ENCODE measurements at regions of chr21 and their contacts with region 1.

Region 1: GRCh38 chr21:43634618-43635017 is 24.7 kb downstream of the HSF2BP start:
- DNase-seq: no peak
- H3K4me3 ChIP-seq: no peak overlapping the region
- H3K27ac ChIP-seq: no peak overlapping the region
- H3K4me1 ChIP-seq: peaks cover 7% of the 10 kb centered on the region
- H3K27me3 ChIP-seq: no peaks in the 10 kb centered on the region
- CTCF ChIP-seq: no peak

Region 2: GRCh38 chr21:43611598-43612369 is 22.8 kb before region 1 on chr21:
- CTCF ChIA-PET with region 1: no interaction called
- dilution Hi-C with region 1: no loop called
- in situ Hi-C with region 1: no loop called
- intact Hi-C with region 1: loop called (anchors 2 kb)
- DNase-seq: peak; percentile 57
- H3K4me3 ChIP-seq: no peak overlapping the region
- H3K27ac ChIP-seq: no peak overlapping the region
- H3K4me1 ChIP-seq: peaks cover 36% of the 10 kb centered on the region
- H3K27me3 ChIP-seq: no peaks in the 10 kb centered on the region
- CTCF ChIP-seq: peak; percentile 72 to 87

Region 3: DNA sequence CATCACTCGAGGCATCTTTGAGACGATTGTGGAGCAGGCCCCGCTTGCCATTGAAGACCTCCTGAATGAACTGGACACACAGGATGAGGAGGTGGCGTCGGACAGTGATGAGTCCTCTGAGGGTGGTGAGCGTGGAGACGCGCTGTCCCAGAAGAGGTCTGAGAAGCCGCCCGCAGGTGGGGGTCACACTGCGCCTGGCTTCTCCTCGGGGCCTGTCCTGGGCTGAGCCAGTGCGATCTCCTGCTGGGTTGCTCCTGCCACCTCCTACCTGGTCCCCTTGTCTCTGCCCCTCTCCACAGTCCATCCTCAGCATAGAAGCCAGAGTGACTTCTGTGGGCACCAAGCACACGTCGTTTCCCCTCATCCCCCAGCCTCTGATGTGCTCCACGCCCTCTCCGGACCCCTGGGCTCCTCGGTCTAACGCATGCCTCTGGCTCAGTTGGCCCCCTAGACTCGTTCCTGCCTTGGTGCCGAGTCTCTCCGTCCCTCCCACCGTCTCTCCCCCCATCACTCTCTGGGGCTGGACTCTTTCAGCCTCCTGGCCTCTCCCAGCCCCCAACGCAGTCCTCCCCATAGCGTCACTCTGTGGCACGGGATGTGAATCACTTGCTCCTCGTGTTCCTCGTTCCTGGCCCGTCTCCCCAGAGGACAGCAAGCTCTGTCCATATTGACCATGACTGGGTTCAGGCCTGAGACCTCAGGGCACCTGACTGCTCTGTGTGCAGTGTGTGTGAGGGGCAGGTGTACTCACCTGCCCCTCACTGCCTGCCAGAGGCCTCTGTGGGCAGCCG is 163.5 kb after region 1 on chr21:
- CTCF ChIA-PET with region 1: no interaction called
- dilution Hi-C with region 1: no loop called
- in situ Hi-C with region 1: no loop called
- intact Hi-C with region 1: no loop called
- DNase-seq: no peak
- H3K4me3 ChIP-seq: no peak overlapping the region
- H3K27ac ChIP-seq: no peak overlapping the region
- H3K4me1 ChIP-seq: no peaks in the 10 kb centered on the region
- H3K27me3 ChIP-seq: no peaks in the 10 kb centered on the region
- CTCF ChIP-seq: no peak

Region 4: DNA sequence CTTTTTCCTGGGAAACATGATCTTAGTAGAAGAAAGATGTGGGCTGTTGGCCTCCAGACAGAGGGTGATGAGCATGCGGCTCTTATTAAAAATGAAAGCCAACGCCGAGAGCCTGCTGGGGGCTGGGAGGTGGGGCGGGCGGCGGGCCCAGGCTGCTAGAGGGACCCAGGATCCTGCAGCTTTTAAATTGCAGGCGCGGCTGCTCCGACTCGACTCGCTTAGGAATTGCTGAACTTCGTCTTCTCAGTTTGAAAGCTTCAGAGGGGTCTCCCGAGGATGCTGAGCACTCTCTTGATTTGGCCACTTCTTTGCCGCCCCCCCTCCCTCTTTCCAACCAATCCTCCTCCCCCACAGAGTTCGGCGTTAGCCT is 231.6 kb after region 1 on chr21:
- CTCF ChIA-PET with region 1: no interaction called
- dilution Hi-C with region 1: no loop called
- in situ Hi-C with region 1: no loop called
- intact Hi-C with region 1: no loop called
- DNase-seq: peak; percentile 29
- H3K4me3 ChIP-seq: peak overlapping the region; percentile 55 to 62 (median 58)
- H3K27ac ChIP-seq: no peak overlapping the region
- H3K4me1 ChIP-seq: peaks cover 14% of the 10 kb centered on the region
- H3K27me3 ChIP-seq: no peaks in the 10 kb centered on the region
- CTCF ChIP-seq: no peak

Measured in mammary epithelial cell (primary cell).